ENCODE measurements at regions of chr10 and their contacts with region 1.

Region 1: DNA sequence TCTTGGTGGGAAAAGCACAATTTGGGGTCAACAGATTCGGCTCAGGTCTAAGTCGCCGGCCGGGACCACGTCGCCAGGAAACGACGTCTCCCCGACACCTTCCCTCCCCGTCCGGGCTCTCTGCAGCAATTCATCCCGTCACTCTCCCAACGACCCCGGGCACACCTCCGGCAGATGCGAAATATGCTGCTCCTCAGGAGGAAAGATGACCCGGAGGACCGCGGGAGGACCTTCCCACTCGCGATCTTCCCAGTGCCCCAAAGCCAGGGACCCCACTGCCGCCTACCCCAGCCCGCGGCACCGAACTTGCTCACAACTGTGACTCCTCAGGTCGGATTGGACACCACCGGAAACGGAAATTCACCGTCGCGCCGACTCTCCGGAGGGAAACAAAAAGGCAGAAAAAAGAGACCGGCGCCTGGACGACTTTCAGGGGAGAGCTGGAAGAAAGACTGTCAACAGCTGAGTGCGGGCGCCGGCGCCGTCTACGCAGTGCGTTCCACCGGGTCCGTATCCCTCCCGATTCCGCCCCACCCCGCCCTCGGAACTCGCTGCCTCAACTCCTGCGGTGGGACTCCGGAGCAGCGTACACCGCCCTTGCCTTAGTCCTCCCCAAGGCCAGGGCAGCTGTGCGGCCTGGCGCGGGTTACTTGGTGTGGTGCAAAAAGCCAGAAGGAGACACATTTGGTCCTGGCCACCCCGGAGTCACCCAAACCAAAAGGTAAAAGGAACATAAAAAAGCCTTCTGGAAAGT is 13.8 kb upstream of the SEC24C start:
- DNase-seq: no peak
- H3K4me3 ChIP-seq: peak overlapping the region; percentile 94
- CTCF ChIP-seq: no peak

Region 2: DNA sequence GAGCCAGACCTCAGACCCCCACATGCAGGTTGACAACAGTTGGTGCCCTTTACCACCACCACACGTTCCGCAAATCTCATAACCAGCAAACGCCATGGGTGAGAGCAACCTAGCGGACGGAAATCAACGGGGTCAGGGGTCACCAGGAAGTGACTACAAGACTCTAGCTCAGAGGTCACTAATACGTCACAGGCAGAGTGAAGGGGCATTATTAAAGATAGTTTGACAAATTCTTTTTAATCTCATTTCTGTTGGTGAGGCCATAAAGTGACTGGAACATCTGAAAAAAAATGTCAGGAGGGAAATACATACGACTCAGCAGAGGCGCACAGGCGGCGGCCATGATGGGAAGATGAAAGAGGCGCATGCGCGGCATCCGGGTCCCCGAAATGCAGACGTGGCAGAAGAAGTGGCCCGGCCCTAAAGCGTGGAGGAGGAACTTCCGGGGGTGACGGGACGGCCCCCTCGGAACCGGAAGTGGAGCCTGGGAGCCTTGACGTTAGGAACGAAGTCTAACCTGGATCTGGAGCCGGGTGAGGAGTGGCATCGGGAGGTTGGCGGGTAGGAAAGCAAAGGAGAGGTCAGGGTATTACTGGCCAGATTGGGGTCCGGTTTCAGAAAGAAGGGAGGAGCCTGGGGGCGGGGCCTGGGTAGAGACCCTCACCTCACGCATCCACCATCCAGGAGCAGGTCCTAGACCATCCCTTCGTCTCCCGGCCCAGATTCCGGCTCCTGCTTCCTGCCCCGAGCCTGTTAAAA is 13.8 kb after region 1 on chr10 and contains the start of gene SEC24C:
- CTCF ChIA-PET with region 1: interaction called, 3 read pairs
- POLR2A ChIA-PET with region 1: interaction called, 28 read pairs
- DNase-seq: peak; percentile 65
- H3K4me3 ChIP-seq: peak within 1 kb of the TSS; percentile 97
- CTCF ChIP-seq: no peak